Right cardiac atrium (tissue), 5 donors: ENCODE measurements at regions of chr5 and their contacts with region 1.

Region 1: GRCh38 chr5:172006321-172007174 is at the start of gene FBXW11:
- DNase-seq: peak; percentile 98 to 99 (median 98)
- ATAC-seq: peak; percentile 96
- H3K4me3 ChIP-seq: peak within 1 kb of the TSS; percentile 67
- H3K27ac ChIP-seq: peak within 1 kb of the TSS; percentile 96
- H3K4me1 ChIP-seq: peaks cover 3% of the 10 kb centered on the region
- H3K27me3 ChIP-seq: no peaks in the 10 kb centered on the region
- total RNA-seq, gene FBXW11: 62.3 to 70.7 (median 67.3) TPM

Region 2: GRCh38 chr5:171927345-171927941 is 79.1 kb before region 1 on chr5:
- intact Hi-C with region 1: loop called in 1 of 4 experiments (anchors 10 kb)
- DNase-seq: no peak
- ATAC-seq: no peak
- H3K4me3 ChIP-seq: no peak overlapping the region
- H3K27ac ChIP-seq: no peak overlapping the region
- H3K4me1 ChIP-seq: no peaks in the 10 kb centered on the region
- H3K27me3 ChIP-seq: no peaks in the 10 kb centered on the region